Sigmoid colon (tissue), 7 donors: ENCODE measurements at regions of chr3 and their contacts with region 1.

Region 1: GRCh38 chr3:160027541-160028195 is 39.0 kb downstream of the IL12A start:
- DNase-seq: no peak
- H3K4me3 ChIP-seq: no peak overlapping the region
- H3K27ac ChIP-seq: no peak overlapping the region
- H3K4me1 ChIP-seq: no peaks in the 10 kb centered on the region
- H3K27me3 ChIP-seq: no peaks in the 10 kb centered on the region
- CTCF ChIP-seq: no peak
- EP300 ChIP-seq: no peak
- POLR2A ChIP-seq: no peak

Region 2: GRCh38 chr3:160065282-160065681 is 37.6 kb after region 1 on chr3:
- intact Hi-C with region 1: no loop called
- DNase-seq: no peak
- H3K4me3 ChIP-seq: no peak overlapping the region
- H3K27ac ChIP-seq: no peak overlapping the region
- H3K4me1 ChIP-seq: no peaks in the 10 kb centered on the region
- H3K27me3 ChIP-seq: no peaks in the 10 kb centered on the region
- CTCF ChIP-seq: no peak
- EP300 ChIP-seq: no peak
- POLR2A ChIP-seq: no peak

Region 3: DNA sequence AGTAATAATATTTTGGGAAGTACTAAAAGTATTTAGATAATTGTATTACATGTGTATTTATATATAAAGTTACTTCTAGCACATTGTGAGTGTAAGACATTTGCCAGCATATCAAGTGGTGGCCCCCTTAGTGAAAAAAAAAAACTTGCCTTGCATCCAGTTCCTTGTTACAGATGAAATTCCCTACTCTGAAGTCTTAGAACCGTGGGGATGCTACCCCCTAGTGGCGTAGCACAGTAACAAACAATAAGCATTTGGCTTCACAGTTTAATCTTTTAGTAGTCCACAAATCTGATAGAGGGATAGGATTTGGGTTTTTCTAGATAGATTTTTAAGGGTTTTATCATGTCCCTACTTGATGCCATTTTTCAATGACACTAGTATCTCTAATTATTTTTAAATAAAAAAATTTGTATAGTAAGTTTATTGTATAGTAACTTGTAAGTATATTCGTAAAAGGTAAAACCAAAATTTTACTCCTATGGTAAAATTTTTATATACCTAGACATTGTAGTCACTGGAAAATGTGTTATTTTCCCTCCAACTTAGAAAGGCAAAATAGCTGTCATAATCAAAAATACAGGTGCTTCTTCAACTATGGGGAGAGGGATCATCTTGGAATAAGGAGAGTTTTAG is 386.1 kb after region 1 on chr3:
- intact Hi-C with region 1: loop called (anchors 2 kb)
- DNase-seq: no peak
- H3K4me3 ChIP-seq: no peak overlapping the region
- H3K27ac ChIP-seq: no peak overlapping the region
- H3K4me1 ChIP-seq: no peaks in the 10 kb centered on the region
- H3K27me3 ChIP-seq: no peaks in the 10 kb centered on the region
- CTCF ChIP-seq: peak; percentile 54 to 91 (median 61)
- EP300 ChIP-seq: no peak
- POLR2A ChIP-seq: no peak